Activated CD8-positive, alpha-beta memory T cell treated with anti-CD3 and anti-CD28 coated beads, Interleukin-2, amount 10 ng/mL, durations not matched to agents 7 days and 5 days (primary cell): ENCODE measurements at regions of chr19 and their contacts with region 1.

Region 1: GRCh38 chr19:12660980-12661379 is 5.6 kb downstream of the MAN2B1 start:
- DNase-seq: no peak
- ATAC-seq: no peak
- H3K4me3 Mint-ChIP-seq: no peak overlapping the region
- H3K27ac Mint-ChIP-seq: no peak overlapping the region
- H3K4me1 Mint-ChIP-seq: peaks cover 20% of the 10 kb centered on the region
- H3K27me3 Mint-ChIP-seq: no peaks in the 10 kb centered on the region

Region 2: GRCh38 chr19:12672744-12673143 is 11.8 kb after region 1 on chr19:
- CTCF ChIA-PET with region 1: interaction called, 28 read pairs
- DNase-seq: no peak
- ATAC-seq: no peak
- H3K4me3 Mint-ChIP-seq: no peak overlapping the region
- H3K27ac Mint-ChIP-seq: no peak overlapping the region
- H3K4me1 Mint-ChIP-seq: peaks cover 40% of the 10 kb centered on the region
- H3K27me3 Mint-ChIP-seq: no peaks in the 10 kb centered on the region

Region 3: GRCh38 chr19:12703046-12703445 is 42.1 kb after region 1 on chr19:
- CTCF ChIA-PET with region 1: no interaction called
- DNase-seq: no peak
- ATAC-seq: peak; percentile 21
- H3K4me3 Mint-ChIP-seq: no peak overlapping the region
- H3K27ac Mint-ChIP-seq: no peak overlapping the region
- H3K4me1 Mint-ChIP-seq: peaks cover 4% of the 10 kb centered on the region
- H3K27me3 Mint-ChIP-seq: no peaks in the 10 kb centered on the region